Ovary (tissue), 10 donors: ENCODE measurements at regions of chr12 and their contacts with region 1.

Region 1: DNA sequence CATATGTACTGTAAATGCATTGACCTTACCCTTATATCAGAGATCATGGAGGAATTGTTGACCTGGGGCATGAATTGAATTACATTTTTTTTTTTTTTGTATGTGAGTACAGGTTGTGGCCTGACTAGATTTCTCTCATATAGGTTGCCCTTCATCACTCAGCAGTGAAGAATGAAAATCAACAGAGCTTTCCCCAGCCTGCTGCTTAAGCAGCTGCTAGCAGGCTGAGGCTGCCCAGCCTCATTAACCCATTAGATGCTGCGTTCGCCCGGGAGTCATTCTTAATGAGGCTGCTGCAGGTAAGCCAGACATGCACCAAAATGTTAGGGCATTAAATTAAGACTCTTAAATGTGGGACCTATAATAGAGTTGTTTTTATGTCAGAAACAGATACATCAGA is 236.0 kb downstream of the ETNK1 start:
- DNase-seq: no peak
- H3K4me3 ChIP-seq: no peak overlapping the region
- H3K27ac ChIP-seq: no peak overlapping the region
- H3K4me1 ChIP-seq: no peaks in the 10 kb centered on the region
- H3K27me3 ChIP-seq: no peaks in the 10 kb centered on the region
- CTCF ChIP-seq: no peak
- EP300 ChIP-seq: no peak
- POLR2A ChIP-seq: no peak

Region 2: DNA sequence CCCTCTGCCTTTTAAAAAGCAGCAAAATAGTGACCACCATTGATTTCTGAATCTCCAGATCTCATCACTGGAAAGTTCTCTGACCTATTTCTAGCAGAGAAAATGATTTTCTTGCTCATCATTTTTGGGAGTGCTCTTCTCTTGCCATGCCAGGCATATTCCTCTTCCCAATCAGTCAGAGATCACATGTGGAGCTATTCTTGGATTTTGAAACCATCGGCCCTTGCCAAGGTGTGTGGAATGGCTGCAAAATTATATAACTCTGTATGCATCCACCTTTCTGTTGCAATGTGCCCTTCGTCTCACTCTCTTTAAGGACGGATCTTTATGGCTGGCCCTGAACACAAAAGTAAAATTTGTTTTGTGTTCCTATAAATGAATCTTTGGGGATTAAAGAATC is 1177.8 kb before region 1 on chr12:
- intact Hi-C with region 1: loop called in 1 of 4 experiments (anchors 5 kb)
- DNase-seq: no peak
- H3K4me3 ChIP-seq: no peak overlapping the region
- H3K27ac ChIP-seq: no peak overlapping the region
- H3K4me1 ChIP-seq: no peaks in the 10 kb centered on the region
- H3K27me3 ChIP-seq: no peaks in the 10 kb centered on the region
- CTCF ChIP-seq: no peak
- EP300 ChIP-seq: no peak
- POLR2A ChIP-seq: no peak